ENCODE measurements at regions of chr9 and their contacts with region 1.

Region 1: GRCh38 chr9:36400332-36401163 is 479 bp upstream of the RNF38 start:
- DNase-seq: peak; percentile 92
- H3K4me3 ChIP-seq: peak overlapping the region; percentile 82 to 94 (median 89)
- H3K27ac ChIP-seq: peak overlapping the region; percentile 88
- H3K4me1 ChIP-seq: peaks cover 18% of the 10 kb centered on the region
- H3K27me3 ChIP-seq: no peaks in the 10 kb centered on the region
- CTCF ChIP-seq: no peak

Region 2: GRCh38 chr9:36204906-36205547 is 195.5 kb before region 1 on chr9:
- CTCF ChIA-PET with region 1: no interaction called
- dilution Hi-C with region 1: loop called (anchors 25 kb)
- in situ Hi-C with region 1: no loop called
- intact Hi-C with region 1: no loop called
- DNase-seq: no peak
- H3K4me3 ChIP-seq: no peak overlapping the region
- H3K27ac ChIP-seq: no peak overlapping the region
- H3K4me1 ChIP-seq: peaks cover 16% of the 10 kb centered on the region
- H3K27me3 ChIP-seq: no peaks in the 10 kb centered on the region
- CTCF ChIP-seq: peak in 1 of 2 donors; percentile 24

Region 3: GRCh38 chr9:36276781-36277181 is 123.8 kb before region 1 on chr9:
- CTCF ChIA-PET with region 1: no interaction called
- dilution Hi-C with region 1: loop called (anchors 25 kb)
- in situ Hi-C with region 1: no loop called
- intact Hi-C with region 1: no loop called
- DNase-seq: peak; percentile 37
- H3K4me3 ChIP-seq: peak overlapping the region in 2 of 3 experiments; percentile 23 to 34
- H3K27ac ChIP-seq: peak overlapping the region; percentile 3
- H3K4me1 ChIP-seq: no peaks in the 10 kb centered on the region
- H3K27me3 ChIP-seq: no peaks in the 10 kb centered on the region
- CTCF ChIP-seq: no peak

Region 4: DNA sequence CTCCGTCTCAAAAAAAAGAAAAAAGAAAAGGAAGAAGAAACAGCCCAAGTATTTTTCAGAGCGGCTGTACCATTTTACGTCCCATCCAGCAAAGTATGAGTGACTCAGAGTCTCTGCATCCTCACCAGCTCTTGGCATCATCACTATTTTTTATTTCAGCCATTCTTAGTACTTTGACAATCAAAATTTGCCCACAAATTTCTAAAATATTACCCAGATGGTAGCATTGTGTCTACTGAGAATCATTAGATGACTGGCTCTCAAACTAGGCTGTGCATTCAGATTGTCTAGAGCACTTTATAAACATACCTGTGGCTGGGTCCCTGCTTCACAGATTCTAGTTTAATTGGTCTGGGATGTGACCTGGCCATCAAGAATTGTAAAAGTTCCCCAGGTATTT is 150.6 kb after region 1 on chr9:
- CTCF ChIA-PET with region 1: no interaction called
- dilution Hi-C with region 1: no loop called
- in situ Hi-C with region 1: loop called in 1 of 2 experiments (anchors 10 kb)
- intact Hi-C with region 1: no loop called
- DNase-seq: no peak
- H3K4me3 ChIP-seq: no peak overlapping the region
- H3K27ac ChIP-seq: no peak overlapping the region
- H3K4me1 ChIP-seq: no peaks in the 10 kb centered on the region
- H3K27me3 ChIP-seq: no peaks in the 10 kb centered on the region
- CTCF ChIP-seq: no peak

Region 5: GRCh38 chr9:36625006-36625615 is 224.6 kb after region 1 on chr9:
- CTCF ChIA-PET with region 1: no interaction called
- dilution Hi-C with region 1: no loop called
- in situ Hi-C with region 1: no loop called
- intact Hi-C with region 1: loop called (anchors 10 kb)
- DNase-seq: peak; percentile 85
- H3K4me3 ChIP-seq: no peak overlapping the region
- H3K27ac ChIP-seq: peak overlapping the region; percentile 77
- H3K4me1 ChIP-seq: peaks cover 22% of the 10 kb centered on the region
- H3K27me3 ChIP-seq: no peaks in the 10 kb centered on the region
- CTCF ChIP-seq: no peak